Transverse colon (tissue), 4 donors: ENCODE measurements at regions of chr12 and their contacts with region 1.

Region 1: GRCh38 chr12:10884086-10884725 is at the start of gene PRH1:
- DNase-seq: no peak
- H3K4me3 ChIP-seq: no peak within 1 kb of the TSS
- H3K27ac ChIP-seq: no peak within 1 kb of the TSS
- H3K4me1 ChIP-seq: no peaks in the 10 kb centered on the region
- H3K27me3 ChIP-seq: no peaks in the 10 kb centered on the region
- CTCF ChIP-seq: no peak
- EP300 ChIP-seq: no peak
- POLR2A ChIP-seq: no peak
- total RNA-seq, gene PRH1: 4.8 to 64.8 (median 32.2) TPM

Region 2: DNA sequence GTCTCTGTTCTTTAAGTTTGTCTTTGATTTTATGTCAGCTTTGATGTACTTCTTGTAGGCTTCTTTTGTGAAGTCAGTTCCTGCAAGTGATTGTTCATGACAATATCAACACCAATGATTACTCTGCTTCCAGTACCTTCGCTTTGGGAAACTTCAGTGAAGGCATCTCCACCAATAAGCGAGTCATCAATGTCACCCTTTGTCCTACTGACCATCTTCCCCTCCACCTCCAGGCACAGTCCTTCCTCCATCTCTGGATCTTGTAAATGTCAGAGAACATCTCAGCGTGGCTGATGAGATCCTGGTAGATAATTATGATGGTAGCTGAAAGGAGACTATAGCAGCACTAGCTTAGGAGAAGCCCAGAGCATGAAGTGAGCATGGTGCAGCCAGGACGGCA is 1728.1 kb before region 1 on chr12:
- in situ Hi-C with region 1: no loop called
- intact Hi-C with region 1: loop called (anchors 10 kb)
- DNase-seq: no peak
- H3K4me3 ChIP-seq: no peak overlapping the region
- H3K27ac ChIP-seq: no peak overlapping the region
- H3K4me1 ChIP-seq: no peaks in the 10 kb centered on the region
- H3K27me3 ChIP-seq: no peaks in the 10 kb centered on the region
- CTCF ChIP-seq: no peak
- EP300 ChIP-seq: no peak
- POLR2A ChIP-seq: no peak

Region 3: GRCh38 chr12:10783252-10783651 is 101.0 kb before region 1 on chr12:
- in situ Hi-C with region 1: no loop called
- intact Hi-C with region 1: no loop called
- DNase-seq: no peak
- H3K4me3 ChIP-seq: no peak overlapping the region
- H3K27ac ChIP-seq: no peak overlapping the region
- H3K4me1 ChIP-seq: no peaks in the 10 kb centered on the region
- H3K27me3 ChIP-seq: no peaks in the 10 kb centered on the region
- CTCF ChIP-seq: no peak
- EP300 ChIP-seq: no peak
- POLR2A ChIP-seq: no peak

Region 4: GRCh38 chr12:10861366-10861765 is 22.8 kb before region 1 on chr12:
- in situ Hi-C with region 1: no loop called
- intact Hi-C with region 1: no loop called
- DNase-seq: no peak
- H3K4me3 ChIP-seq: no peak overlapping the region
- H3K27ac ChIP-seq: no peak overlapping the region
- H3K4me1 ChIP-seq: no peaks in the 10 kb centered on the region
- H3K27me3 ChIP-seq: no peaks in the 10 kb centered on the region
- CTCF ChIP-seq: no peak
- EP300 ChIP-seq: no peak
- POLR2A ChIP-seq: no peak